Panc1 (cell line): ENCODE measurements at regions of chr10 and their contacts with region 1.

Region 1: GRCh38 chr10:52566471-52567246 is 205.9 kb downstream of the MBL2 start:
- DNase-seq: peak; percentile 58
- ATAC-seq: peak; percentile 81
- H3K4me3 ChIP-seq: peak overlapping the region in 1 of 2 experiments; percentile 2; a peak in 2 of 4 replicates
- H3K27ac ChIP-seq: peak overlapping the region; percentile 67
- H3K4me1 ChIP-seq: peaks cover 11% of the 10 kb centered on the region; the same call in 1 of the 2 replicates
- H3K27me3 ChIP-seq: no peaks in the 10 kb centered on the region
- CTCF ChIP-seq: peak; percentile 76; the same call in 1 of the 2 replicates

Region 2: GRCh38 chr10:52313933-52314816 is 252.5 kb before region 1 on chr10 and contains the start of gene DKK1:
- CTCF ChIA-PET with region 1: interaction called, 12 read pairs
- POLR2A ChIA-PET with region 1: no interaction called
- in situ Hi-C with region 1: no loop called
- intact Hi-C with region 1: loop called (anchors 2 kb)
- DNase-seq: no peak
- ATAC-seq: peak; percentile 75
- H3K4me3 ChIP-seq: peak within 1 kb of the TSS; percentile 91 to 97
- H3K27ac ChIP-seq: peak within 1 kb of the TSS; percentile 100
- H3K4me1 ChIP-seq: peaks cover 53% of the 10 kb centered on the region
- H3K27me3 ChIP-seq: no peaks in the 10 kb centered on the region
- CTCF ChIP-seq: peak; percentile 99
- total RNA-seq, gene DKK1: 563 TPM

Region 3: DNA sequence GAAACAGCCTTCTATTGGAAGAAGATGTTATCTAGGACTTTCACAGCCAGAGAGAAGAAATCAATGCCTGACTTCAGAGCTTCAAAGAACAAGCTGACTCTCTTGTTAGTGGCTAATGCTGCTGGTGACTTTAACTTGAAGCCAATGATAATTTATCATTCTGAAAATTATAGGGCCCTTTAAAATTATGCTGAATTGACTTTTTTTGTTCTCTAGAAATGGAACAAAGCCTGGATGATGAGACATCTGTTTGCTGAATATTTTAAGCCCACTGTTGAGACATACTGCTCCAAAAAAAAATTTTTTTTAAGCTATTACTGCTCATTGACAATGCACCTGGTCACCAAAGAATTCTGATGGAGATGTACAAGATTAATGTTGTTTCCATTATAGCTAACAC is 16.7 kb after region 1 on chr10:
- CTCF ChIA-PET with region 1: no interaction called
- POLR2A ChIA-PET with region 1: interaction called, 25 read pairs
- in situ Hi-C with region 1: no loop called
- intact Hi-C with region 1: no loop called
- DNase-seq: no peak
- ATAC-seq: no peak
- H3K4me3 ChIP-seq: no peak overlapping the region
- H3K27ac ChIP-seq: no peak overlapping the region
- H3K4me1 ChIP-seq: no peaks in the 10 kb centered on the region
- H3K27me3 ChIP-seq: no peaks in the 10 kb centered on the region
- CTCF ChIP-seq: no peak